ENCODE measurements at regions of chr1 and their contacts with region 1.

Region 1: DNA sequence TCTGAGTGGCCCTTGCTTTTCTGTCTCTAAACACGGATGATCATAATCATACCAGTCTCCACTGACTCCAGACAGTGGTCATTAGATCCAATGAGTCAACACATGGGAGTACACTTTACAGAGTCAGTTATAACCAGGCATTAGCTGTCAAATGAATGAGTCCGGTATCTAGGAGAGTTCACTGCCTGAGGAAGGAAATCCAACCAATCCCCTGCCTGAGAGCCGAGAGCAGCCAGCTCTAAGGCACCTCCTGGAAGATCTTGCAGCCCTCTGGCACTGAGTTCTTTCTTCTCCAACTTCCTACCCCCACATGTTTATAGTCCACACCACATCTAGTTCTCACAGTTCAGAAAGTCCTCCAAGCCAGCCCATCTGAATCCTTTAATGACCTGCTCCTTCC is 29.4 kb upstream of the RBM15 start:
- DNase-seq: no peak
- CTCF ChIP-seq: no peak

Region 2: GRCh38 chr1:110203021-110203661 is 106.6 kb before region 1 on chr1:
- in situ Hi-C with region 1: loop called (anchors 5 kb)
- DNase-seq: peak; percentile 79
- CTCF ChIP-seq: peak; percentile 72